Activated naive CD4-positive, alpha-beta T cell treated with anti-CD3 and anti-CD28 coated beads for 36 hours (primary cell): ENCODE measurements at regions of chr12 and their contacts with region 1.

Region 1: GRCh38 chr12:55926738-55927587 is 731 bp downstream of the PYM1 start:
- DNase-seq: peak; percentile 96
- H3K4me3 Mint-ChIP-seq: peak overlapping the region; percentile 99
- H3K27ac Mint-ChIP-seq: peak overlapping the region; percentile 100
- H3K4me1 Mint-ChIP-seq: peaks cover 44% of the 10 kb centered on the region
- H3K27me3 Mint-ChIP-seq: no peaks in the 10 kb centered on the region

Region 2: GRCh38 chr12:55738123-55739024 is 188.6 kb before region 1 on chr12:
- CTCF ChIA-PET with region 1: interaction called, 4 read pairs
- intact Hi-C with region 1: loop called (anchors 1 kb)
- DNase-seq: peak; percentile 89
- H3K4me3 Mint-ChIP-seq: peak overlapping the region; percentile 75
- H3K27ac Mint-ChIP-seq: peak overlapping the region; percentile 82
- H3K4me1 Mint-ChIP-seq: peaks cover 22% of the 10 kb centered on the region
- H3K27me3 Mint-ChIP-seq: no peaks in the 10 kb centered on the region

Region 3: GRCh38 chr12:55874443-55874842 is 52.5 kb before region 1 on chr12:
- CTCF ChIA-PET with region 1: no interaction called
- intact Hi-C with region 1: no loop called
- DNase-seq: no peak
- H3K4me3 Mint-ChIP-seq: no peak overlapping the region
- H3K27ac Mint-ChIP-seq: no peak overlapping the region
- H3K4me1 Mint-ChIP-seq: no peaks in the 10 kb centered on the region
- H3K27me3 Mint-ChIP-seq: no peaks in the 10 kb centered on the region

Region 4: GRCh38 chr12:55915482-55915859 is 11.5 kb before region 1 on chr12:
- CTCF ChIA-PET with region 1: interaction called, 9 read pairs
- intact Hi-C with region 1: loop called (anchors 1 kb)
- DNase-seq: no peak
- H3K4me3 Mint-ChIP-seq: no peak overlapping the region
- H3K27ac Mint-ChIP-seq: peak overlapping the region; percentile 54
- H3K4me1 Mint-ChIP-seq: peaks cover 40% of the 10 kb centered on the region
- H3K27me3 Mint-ChIP-seq: no peaks in the 10 kb centered on the region

Region 5: DNA sequence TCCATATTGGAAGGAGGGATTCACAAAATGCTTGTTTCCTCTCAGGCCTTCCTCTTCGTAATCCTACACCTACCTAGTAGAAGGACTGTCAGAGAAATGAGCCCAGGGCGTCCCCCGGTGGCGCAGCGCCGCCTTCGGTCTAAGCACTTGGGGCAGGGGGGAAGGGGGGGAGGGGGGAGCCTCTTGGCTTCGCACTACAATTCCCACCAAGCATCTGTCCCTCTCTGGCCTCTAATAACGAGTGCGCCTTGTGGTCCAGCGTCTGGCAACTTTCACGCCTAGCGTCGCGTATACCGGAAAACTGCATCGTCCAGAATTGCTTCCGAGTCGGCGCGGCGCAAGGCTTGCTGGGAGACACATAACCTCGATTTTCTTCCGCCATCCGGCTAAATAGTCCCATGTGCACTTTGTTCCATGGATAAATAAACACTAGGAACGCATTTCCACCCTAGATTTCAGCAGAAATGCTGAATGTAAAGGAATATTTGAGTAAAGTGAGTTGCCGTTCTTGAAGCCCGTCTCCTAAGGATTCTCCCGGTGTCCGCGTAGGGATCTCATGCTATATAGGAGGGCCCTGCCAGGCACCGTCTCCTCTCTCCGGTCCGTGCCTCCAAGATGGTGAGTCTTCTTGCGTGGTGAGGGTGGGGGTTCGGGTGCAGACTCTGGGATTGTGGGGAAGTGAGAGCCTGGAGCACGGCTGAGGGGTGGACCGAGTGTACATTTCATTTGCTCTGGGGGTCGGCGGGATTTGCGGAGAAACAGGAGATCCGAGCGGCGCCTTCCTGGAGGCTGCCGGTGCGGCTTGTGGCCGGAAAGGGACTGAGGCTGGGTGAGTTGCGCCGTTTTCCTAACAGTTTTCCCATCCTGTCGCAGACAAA is 114.8 kb after region 1 on chr12 and contains the start of gene RPS26:
- CTCF ChIA-PET with region 1: interaction called, 7 read pairs
- intact Hi-C with region 1: loop called (anchors 1 kb)
- DNase-seq: peak; percentile 96
- H3K4me3 Mint-ChIP-seq: peak within 1 kb of the TSS; percentile 96
- H3K27ac Mint-ChIP-seq: peak within 1 kb of the TSS; percentile 98
- H3K4me1 Mint-ChIP-seq: peaks cover 57% of the 10 kb centered on the region
- H3K27me3 Mint-ChIP-seq: no peaks in the 10 kb centered on the region
- total RNA-seq, gene RPS26: 31.0 to 37.3 TPM

Region 6: GRCh38 chr12:56333679-56334489 is 406.9 kb after region 1 on chr12 and contains the start of gene PAN2:
- CTCF ChIA-PET with region 1: no interaction called
- intact Hi-C with region 1: loop called (anchors 5 kb)
- DNase-seq: peak; percentile 98
- H3K4me3 Mint-ChIP-seq: peak within 1 kb of the TSS; percentile 97
- H3K27ac Mint-ChIP-seq: peak within 1 kb of the TSS; percentile 100
- H3K4me1 Mint-ChIP-seq: peaks cover 44% of the 10 kb centered on the region
- H3K27me3 Mint-ChIP-seq: no peaks in the 10 kb centered on the region
- total RNA-seq, gene PAN2: 82.7 to 85.4 TPM

Region 7: GRCh38 chr12:57846577-57847319 is 1919.8 kb after region 1 on chr12 and contains the start of gene CTDSP2:
- CTCF ChIA-PET with region 1: no interaction called
- intact Hi-C with region 1: loop called (anchors 10 kb)
- DNase-seq: peak; percentile 93
- H3K4me3 Mint-ChIP-seq: peak within 1 kb of the TSS; percentile 88
- H3K27ac Mint-ChIP-seq: peak within 1 kb of the TSS; percentile 92
- H3K4me1 Mint-ChIP-seq: peaks cover 44% of the 10 kb centered on the region
- H3K27me3 Mint-ChIP-seq: peaks cover 7% of the 10 kb centered on the region
- total RNA-seq, gene CTDSP2: 94.6 to 99.8 TPM